Activated CD4-positive, alpha-beta memory T cell treated with anti-CD3 and anti-CD28 coated beads, Interleukin-2, amount 10 ng/mL, durations not matched to agents 7 days and 5 days (primary cell): ENCODE measurements at regions of chr11 and their contacts with region 1.

Region 1: DNA sequence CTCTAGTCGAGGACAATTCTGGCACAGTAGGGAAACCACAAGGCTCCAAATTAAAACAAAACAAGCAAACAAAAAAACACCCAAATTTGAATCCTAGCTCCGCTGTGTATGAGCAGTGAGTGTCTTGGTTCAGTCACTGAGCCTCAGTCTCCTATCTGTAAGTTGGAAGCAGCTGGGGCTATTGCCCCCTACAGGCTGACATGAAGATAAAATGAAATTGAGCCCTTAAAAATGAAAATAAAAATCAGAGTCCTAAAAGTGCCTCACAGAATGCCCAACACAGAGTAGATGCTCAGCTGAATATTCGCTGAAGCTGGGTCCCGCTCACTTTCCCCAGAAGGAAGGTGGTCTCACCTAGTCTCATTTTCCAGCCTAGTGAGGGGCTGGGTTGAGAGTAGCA is 65.2 kb downstream of the PDE2A start:
- DNase-seq: peak; percentile 30
- H3K4me3 Mint-ChIP-seq: no peak overlapping the region
- H3K27ac Mint-ChIP-seq: no peak overlapping the region
- H3K4me1 Mint-ChIP-seq: peaks cover 30% of the 10 kb centered on the region
- H3K27me3 Mint-ChIP-seq: peaks cover 55% of the 10 kb centered on the region

Region 2: GRCh38 chr11:72585762-72586311 is 23.2 kb before region 1 on chr11:
- CTCF ChIA-PET with region 1: interaction called, 18 read pairs
- POLR2A ChIA-PET with region 1: interaction called, 4 read pairs
- DNase-seq: peak; percentile 75
- H3K4me3 Mint-ChIP-seq: peak overlapping the region; percentile 77
- H3K27ac Mint-ChIP-seq: no peak overlapping the region
- H3K4me1 Mint-ChIP-seq: peaks cover 45% of the 10 kb centered on the region
- H3K27me3 Mint-ChIP-seq: peaks cover 43% of the 10 kb centered on the region

Region 3: GRCh38 chr11:72621008-72621610 is 12.1 kb after region 1 on chr11:
- CTCF ChIA-PET with region 1: interaction called, 19 read pairs
- POLR2A ChIA-PET with region 1: interaction called, 10 read pairs
- DNase-seq: peak; percentile 66
- H3K4me3 Mint-ChIP-seq: no peak overlapping the region
- H3K27ac Mint-ChIP-seq: peak overlapping the region; percentile 67
- H3K4me1 Mint-ChIP-seq: peaks cover 58% of the 10 kb centered on the region
- H3K27me3 Mint-ChIP-seq: peaks cover 6% of the 10 kb centered on the region